A673 (cell line): ENCODE measurements at regions of chr12 and their contacts with region 1.

Region 1: DNA sequence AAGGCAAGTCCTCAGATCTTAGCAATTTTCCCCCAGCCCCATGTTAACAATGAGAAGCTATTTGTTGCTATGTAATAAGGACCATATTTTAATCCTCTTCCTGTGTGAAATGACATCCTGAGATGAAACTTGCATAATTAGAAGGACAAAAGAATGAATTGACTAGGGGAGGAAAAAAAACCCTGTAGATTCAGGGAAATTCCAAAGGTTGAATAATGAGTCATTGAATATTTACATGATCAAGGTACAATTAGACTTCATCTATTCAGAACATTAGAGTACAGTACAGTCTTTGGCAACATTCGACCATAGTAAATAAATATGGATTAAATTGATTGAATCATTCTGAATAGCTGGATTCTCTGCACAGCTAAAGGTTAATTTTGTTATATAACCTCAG is 9.4 kb downstream of the MYBPC1 start:
- DNase-seq: peak; percentile 80
- H3K4me3 ChIP-seq: no peak overlapping the region
- H3K27ac ChIP-seq: no peak overlapping the region
- H3K4me1 ChIP-seq: peaks cover 16% of the 10 kb centered on the region
- H3K27me3 ChIP-seq: no peaks in the 10 kb centered on the region
- CTCF ChIP-seq: no peak

Region 2: GRCh38 chr12:102551186-102551585 is 947.1 kb after region 1 on chr12:
- CTCF ChIA-PET with region 1: no interaction called
- POLR2A ChIA-PET with region 1: interaction called, 17 read pairs
- intact Hi-C with region 1: no loop called
- DNase-seq: no peak
- H3K4me3 ChIP-seq: no peak overlapping the region
- H3K27ac ChIP-seq: no peak overlapping the region
- H3K4me1 ChIP-seq: no peaks in the 10 kb centered on the region
- H3K27me3 ChIP-seq: peaks cover 34% of the 10 kb centered on the region
- CTCF ChIP-seq: no peak